A549 (cell line): ENCODE measurements at regions of chr11 and their contacts with region 1.

Region 1: GRCh38 chr11:27158722-27159679 is 118.4 kb downstream of the BBOX1 start:
- DNase-seq: peak; percentile 80 to 84
- ATAC-seq: peak; percentile 92 to 97
- H3K4me3 ChIP-seq: no peak overlapping the region
- H3K27ac ChIP-seq: no peak overlapping the region
- H3K4me1 ChIP-seq: no peaks in the 10 kb centered on the region
- CTCF ChIP-seq: peak; percentile 90
- EP300 ChIP-seq: no peak
- POLR2A ChIP-seq: no peak
- RAD21 ChIP-seq: peak; percentile 93 to 95

Region 2: GRCh38 chr11:26753723-26754504 is 405.1 kb before region 1 on chr11:
- CTCF ChIA-PET with region 1: interaction called, 67 read pairs
- POLR2A ChIA-PET with region 1: no interaction called
- DNase-seq: peak; percentile 21 to 62
- ATAC-seq: peak; percentile 89 to 95
- H3K4me3 ChIP-seq: no peak overlapping the region
- H3K27ac ChIP-seq: no peak overlapping the region
- H3K4me1 ChIP-seq: no peaks in the 10 kb centered on the region
- CTCF ChIP-seq: peak; percentile 83
- EP300 ChIP-seq: no peak
- POLR2A ChIP-seq: no peak
- RAD21 ChIP-seq: peak; percentile 79 to 90

Region 3: GRCh38 chr11:26761361-26761809 is 397.6 kb before region 1 on chr11:
- CTCF ChIA-PET with region 1: interaction called, 67 read pairs
- POLR2A ChIA-PET with region 1: no interaction called
- DNase-seq: no peak
- ATAC-seq: no peak
- H3K4me3 ChIP-seq: no peak overlapping the region
- H3K27ac ChIP-seq: no peak overlapping the region
- H3K4me1 ChIP-seq: no peaks in the 10 kb centered on the region
- CTCF ChIP-seq: no peak
- EP300 ChIP-seq: no peak
- POLR2A ChIP-seq: no peak
- RAD21 ChIP-seq: no peak

Region 4: DNA sequence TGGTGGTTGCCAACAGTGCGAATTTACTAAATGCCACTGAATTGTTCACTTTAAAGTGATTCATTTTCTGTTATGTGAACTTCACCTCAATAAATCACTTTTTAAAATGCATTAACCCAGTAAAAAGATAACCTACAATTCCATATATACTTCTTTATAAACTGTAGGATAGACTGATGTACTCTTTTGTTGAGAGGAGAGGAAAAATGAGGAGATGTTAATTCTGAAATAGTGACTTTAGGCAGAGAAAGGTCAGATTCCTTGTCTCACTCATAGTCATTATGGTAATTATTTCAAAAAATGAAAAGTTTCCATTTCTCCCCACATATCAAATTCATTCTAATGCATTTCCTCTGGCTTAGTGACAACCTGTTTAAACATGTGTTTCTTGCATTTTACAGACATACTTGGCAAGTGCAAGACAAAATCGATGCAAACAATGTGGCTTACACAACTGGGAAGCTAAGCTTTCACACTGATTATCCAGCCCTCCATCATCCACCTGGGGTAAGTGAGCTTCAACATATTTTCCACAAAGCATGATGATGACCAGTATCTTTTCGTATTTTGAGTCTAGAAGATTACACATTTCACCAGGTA is 43.9 kb before region 1 on chr11:
- CTCF ChIA-PET with region 1: no interaction called
- POLR2A ChIA-PET with region 1: no interaction called
- DNase-seq: no peak
- ATAC-seq: no peak
- H3K4me3 ChIP-seq: no peak overlapping the region
- H3K27ac ChIP-seq: no peak overlapping the region
- H3K4me1 ChIP-seq: no peaks in the 10 kb centered on the region
- CTCF ChIP-seq: no peak
- EP300 ChIP-seq: no peak
- POLR2A ChIP-seq: no peak
- RAD21 ChIP-seq: no peak

Region 5: DNA sequence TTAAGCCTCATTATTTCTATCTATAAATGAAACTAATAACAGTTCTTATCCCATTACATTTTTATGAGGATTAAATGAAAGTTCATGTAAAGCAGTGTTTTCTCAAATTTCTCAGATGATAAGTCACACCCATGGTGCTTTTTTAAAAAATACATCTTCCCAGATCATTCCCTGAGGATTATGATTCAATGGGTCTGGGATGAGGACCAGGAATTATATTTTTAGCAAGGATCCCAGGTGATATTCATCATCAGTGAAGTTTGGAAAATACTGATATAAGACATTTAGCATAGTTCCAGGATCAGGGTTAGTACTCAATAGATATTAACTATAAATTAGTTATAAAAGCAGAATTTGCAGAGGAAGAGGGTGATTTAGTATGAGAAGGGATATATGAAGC is 29.3 kb before region 1 on chr11:
- CTCF ChIA-PET with region 1: interaction called, 21 read pairs
- POLR2A ChIA-PET with region 1: no interaction called
- DNase-seq: no peak
- ATAC-seq: no peak
- H3K4me3 ChIP-seq: no peak overlapping the region
- H3K27ac ChIP-seq: no peak overlapping the region
- H3K4me1 ChIP-seq: no peaks in the 10 kb centered on the region
- CTCF ChIP-seq: no peak
- EP300 ChIP-seq: no peak
- POLR2A ChIP-seq: no peak
- RAD21 ChIP-seq: no peak

Region 6: GRCh38 chr11:27139742-27140367 is 19.1 kb before region 1 on chr11:
- CTCF ChIA-PET with region 1: interaction called, 16 read pairs
- POLR2A ChIA-PET with region 1: no interaction called
- DNase-seq: no peak
- ATAC-seq: no peak
- H3K4me3 ChIP-seq: no peak overlapping the region
- H3K27ac ChIP-seq: no peak overlapping the region
- H3K4me1 ChIP-seq: no peaks in the 10 kb centered on the region
- CTCF ChIP-seq: no peak
- EP300 ChIP-seq: no peak
- POLR2A ChIP-seq: no peak
- RAD21 ChIP-seq: no peak

Region 7: DNA sequence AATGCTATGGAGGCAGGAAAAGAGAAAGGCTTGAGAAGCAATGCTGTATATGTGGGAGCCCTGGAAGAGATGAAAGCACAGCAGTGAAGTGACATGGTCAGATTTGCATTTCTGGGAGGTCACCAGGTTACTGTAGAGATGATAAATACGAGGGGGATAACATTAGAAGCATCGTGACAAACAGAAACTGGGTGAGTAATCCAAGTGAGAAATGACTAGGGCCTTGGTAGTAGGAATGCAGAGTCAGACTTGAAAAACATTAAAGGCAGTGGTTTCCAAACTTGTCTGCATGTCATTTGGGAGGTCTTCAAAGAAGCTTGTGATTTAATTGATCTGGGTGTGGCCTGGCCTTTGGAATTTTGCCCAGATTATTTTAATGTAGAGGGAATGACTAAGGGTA is 160.1 kb after region 1 on chr11:
- CTCF ChIA-PET with region 1: no interaction called
- POLR2A ChIA-PET with region 1: no interaction called
- DNase-seq: peak; percentile 58 to 66
- ATAC-seq: peak; percentile 86 to 88
- H3K4me3 ChIP-seq: no peak overlapping the region
- H3K27ac ChIP-seq: peak overlapping the region; percentile 65 to 73
- H3K4me1 ChIP-seq: peaks cover 34% of the 10 kb centered on the region
- CTCF ChIP-seq: no peak
- EP300 ChIP-seq: no peak
- POLR2A ChIP-seq: no peak
- RAD21 ChIP-seq: no peak

Region 8: DNA sequence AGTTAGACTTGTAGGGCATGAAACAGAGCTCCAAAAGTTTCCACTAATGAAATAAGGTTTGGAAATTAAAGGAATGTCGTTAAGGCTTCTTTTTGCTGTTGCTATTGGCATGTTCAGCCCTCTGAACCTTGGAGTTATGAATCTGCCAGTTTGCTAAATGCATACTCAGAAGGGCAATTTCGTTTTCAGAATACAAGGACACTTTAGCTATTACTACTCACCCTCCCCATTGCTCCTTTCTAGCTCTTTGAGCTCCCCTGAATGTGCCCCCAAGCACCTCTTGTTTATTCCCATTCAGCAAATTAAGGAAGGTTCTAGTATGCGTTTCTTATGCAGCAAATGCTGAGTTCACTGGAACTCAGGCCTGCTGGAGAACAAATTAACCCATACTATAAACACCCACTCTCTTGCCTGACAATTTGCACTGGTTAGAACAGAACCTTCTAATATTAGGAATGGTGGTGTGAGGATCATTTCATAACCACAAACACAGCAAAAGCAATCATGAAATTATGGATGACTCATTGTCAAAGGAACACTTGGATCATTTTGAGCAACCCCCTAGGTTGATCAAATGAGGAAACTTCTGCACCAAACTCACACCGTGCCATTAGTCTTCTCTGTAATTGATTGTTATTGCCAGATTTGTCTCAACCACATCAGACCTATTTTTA is 373.8 kb after region 1 on chr11:
- CTCF ChIA-PET with region 1: no interaction called
- POLR2A ChIA-PET with region 1: no interaction called
- DNase-seq: no peak
- ATAC-seq: no peak
- H3K4me3 ChIP-seq: no peak overlapping the region
- H3K27ac ChIP-seq: no peak overlapping the region
- H3K4me1 ChIP-seq: no peaks in the 10 kb centered on the region
- CTCF ChIP-seq: no peak
- EP300 ChIP-seq: no peak
- POLR2A ChIP-seq: no peak
- RAD21 ChIP-seq: no peak